ENCODE measurements at regions of chr14 and their contacts with region 1.

Region 1: GRCh38 chr14:73728717-73729330 is 14.6 kb upstream of the PNMA1 start:
- DNase-seq: peak; percentile 77
- H3K4me3 Mint-ChIP-seq: no peak overlapping the region
- H3K27ac Mint-ChIP-seq: peak overlapping the region; percentile 84
- H3K4me1 Mint-ChIP-seq: peaks cover 35% of the 10 kb centered on the region
- H3K27me3 Mint-ChIP-seq: no peaks in the 10 kb centered on the region

Region 2: GRCh38 chr14:73696466-73697400 is 32.1 kb before region 1 on chr14:
- intact Hi-C with region 1: no loop called
- DNase-seq: no peak
- H3K4me3 Mint-ChIP-seq: peak overlapping the region; percentile 42
- H3K27ac Mint-ChIP-seq: peak overlapping the region; percentile 83
- H3K4me1 Mint-ChIP-seq: peaks cover 34% of the 10 kb centered on the region
- H3K27me3 Mint-ChIP-seq: no peaks in the 10 kb centered on the region

Region 3: DNA sequence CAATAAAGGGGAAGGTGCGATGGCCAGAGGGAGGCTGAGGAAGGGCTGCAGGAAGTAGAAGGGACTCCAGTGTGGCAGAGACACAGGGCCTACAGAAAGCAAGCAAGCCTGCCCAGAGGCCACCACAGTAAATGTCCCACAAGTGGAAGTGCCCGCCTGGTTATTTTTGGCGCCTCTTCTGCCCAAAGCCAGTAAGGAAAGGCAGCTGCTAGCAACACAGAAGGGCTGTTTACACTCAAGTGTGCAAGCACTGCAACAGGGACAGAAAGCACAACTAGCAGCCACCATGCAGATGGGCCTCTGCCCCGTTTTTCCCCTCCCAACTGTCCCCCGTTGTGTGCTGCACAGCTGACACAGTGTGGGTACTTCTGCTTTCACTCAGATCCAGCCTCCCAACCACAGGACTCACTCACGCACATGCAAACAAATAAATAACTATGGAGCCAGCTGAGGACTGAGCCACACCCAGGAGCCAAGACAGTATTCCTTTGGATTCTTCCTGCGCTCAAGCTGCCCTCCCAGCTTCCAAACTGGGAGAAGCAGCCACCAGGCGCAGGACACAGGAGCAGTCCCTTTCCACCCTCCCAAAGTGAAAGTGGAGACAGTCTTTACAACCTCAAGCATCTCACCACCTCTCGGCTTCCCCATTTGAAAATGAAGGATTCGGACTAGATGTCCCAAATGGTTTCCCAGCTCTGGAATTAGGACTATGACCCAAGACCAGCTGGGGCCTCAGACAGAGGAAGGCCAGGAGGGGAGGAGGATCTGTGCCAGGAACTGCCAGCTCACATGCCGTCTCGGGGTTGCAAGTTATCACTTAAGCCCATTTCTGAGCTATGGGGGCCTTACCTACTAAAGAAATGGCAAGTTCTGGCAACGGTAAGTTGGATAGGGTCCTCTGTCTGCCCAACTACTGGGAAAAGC is 25.4 kb after region 1 on chr14:
- intact Hi-C with region 1: loop called (anchors 2 kb)
- DNase-seq: peak; percentile 50
- H3K4me3 Mint-ChIP-seq: peak overlapping the region; percentile 91
- H3K27ac Mint-ChIP-seq: peak overlapping the region; percentile 75
- H3K4me1 Mint-ChIP-seq: peaks cover 87% of the 10 kb centered on the region
- H3K27me3 Mint-ChIP-seq: no peaks in the 10 kb centered on the region

Region 4: DNA sequence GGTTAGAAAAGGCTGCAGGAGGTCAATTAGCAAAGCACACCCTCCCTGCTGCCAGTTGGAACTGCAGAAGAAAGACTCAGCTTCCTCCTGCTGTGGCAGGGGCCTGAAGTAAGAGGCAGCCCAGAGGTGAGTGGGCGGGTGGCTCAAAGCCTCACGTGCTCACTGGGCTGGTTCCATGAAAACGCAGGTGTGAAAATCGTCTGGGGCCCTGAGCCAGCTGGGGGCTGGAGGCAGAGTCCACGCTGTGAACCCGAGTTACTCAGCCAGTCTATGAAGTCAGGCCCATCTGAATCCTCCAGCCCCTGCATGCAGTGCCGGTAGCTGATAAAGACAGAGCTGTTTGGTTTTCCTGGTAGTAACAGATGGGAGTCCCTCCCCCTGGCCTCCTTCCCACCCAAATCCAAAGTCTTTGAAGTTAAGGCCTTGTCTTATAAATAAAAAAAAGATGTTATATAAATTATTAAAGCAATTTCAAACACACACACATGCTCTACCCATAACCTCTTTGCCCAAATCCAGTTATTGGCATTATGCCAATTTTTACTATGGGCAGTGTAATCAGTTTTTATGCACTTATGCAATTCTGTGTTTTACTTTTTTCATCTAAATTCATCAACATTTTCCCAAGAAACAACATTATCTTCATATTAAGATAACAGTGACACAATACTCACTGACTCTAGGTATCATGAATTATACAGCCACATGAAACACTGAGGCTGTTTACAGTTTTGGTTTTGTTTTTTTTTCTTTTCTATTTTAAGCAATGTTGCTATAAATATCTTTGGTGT is 43.2 kb after region 1 on chr14:
- intact Hi-C with region 1: loop called (anchors 5 kb)
- DNase-seq: peak; percentile 49
- H3K4me3 Mint-ChIP-seq: peak overlapping the region; percentile 49
- H3K27ac Mint-ChIP-seq: peak overlapping the region; percentile 62
- H3K4me1 Mint-ChIP-seq: peaks cover 57% of the 10 kb centered on the region
- H3K27me3 Mint-ChIP-seq: no peaks in the 10 kb centered on the region

Region 5: DNA sequence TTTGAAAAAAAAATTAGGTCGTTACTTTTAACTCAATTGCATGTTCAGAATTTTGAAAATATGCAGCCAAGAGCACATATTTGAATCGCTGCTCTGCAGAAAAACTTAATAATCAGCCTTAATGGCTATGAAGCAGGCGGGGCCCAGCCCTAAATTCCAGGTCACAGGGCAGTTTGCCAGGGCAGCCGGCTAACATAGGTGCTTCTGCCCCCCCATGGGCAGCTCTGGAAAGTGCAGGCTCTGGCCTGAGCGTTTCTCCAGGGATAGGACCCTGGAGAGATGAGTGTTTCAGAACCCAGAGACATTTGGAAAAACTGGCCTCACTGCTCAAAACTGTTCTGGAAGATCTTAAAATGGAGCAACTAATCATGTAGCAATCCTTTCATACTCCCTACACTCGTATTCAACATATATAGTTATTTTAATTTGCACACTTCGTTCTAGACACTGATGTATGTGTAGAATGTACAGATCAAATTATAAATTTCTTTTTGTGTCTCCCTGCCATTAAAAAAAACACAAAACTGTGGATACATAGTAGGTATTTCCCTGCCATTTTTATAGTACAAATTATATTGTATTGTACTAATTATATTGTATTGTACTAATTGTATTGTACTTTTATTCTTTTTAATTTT is 96.8 kb after region 1 on chr14:
- intact Hi-C with region 1: loop called (anchors 1 kb)
- DNase-seq: peak; percentile 52
- H3K4me3 Mint-ChIP-seq: no peak overlapping the region
- H3K27ac Mint-ChIP-seq: no peak overlapping the region
- H3K4me1 Mint-ChIP-seq: peaks cover 23% of the 10 kb centered on the region
- H3K27me3 Mint-ChIP-seq: peaks cover 11% of the 10 kb centered on the region

Region 6: DNA sequence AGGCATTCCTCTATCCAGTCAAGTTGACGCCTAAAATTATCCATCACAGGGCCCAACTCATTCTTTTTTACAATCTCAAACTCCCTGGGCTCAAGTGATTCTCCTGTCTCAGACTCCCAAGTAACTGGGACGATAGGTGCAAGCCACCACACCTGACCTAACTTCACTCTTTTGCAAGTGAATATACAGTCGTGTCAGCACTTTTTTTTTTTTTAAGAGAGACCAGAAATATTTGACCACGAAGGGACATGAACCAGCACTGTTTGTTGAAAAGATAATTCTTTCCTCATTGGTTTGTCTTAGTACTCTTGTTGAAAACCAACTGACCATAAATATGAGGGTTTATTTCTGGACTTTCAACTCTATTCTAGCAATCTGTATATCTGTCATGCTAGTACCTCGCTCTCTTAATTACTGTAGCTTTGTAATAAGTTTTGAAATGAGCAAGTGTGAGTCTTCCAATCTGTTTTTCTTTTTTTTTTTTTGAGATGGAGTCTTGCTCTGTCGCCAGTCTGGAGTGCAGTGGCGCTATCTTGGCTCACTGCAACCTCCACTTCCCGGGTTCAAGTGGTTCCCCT is 136.8 kb after region 1 on chr14:
- intact Hi-C with region 1: loop called (anchors 5 kb)
- DNase-seq: no peak
- H3K4me3 Mint-ChIP-seq: no peak overlapping the region
- H3K27ac Mint-ChIP-seq: no peak overlapping the region
- H3K4me1 Mint-ChIP-seq: peaks cover 2% of the 10 kb centered on the region
- H3K27me3 Mint-ChIP-seq: no peaks in the 10 kb centered on the region

Region 7: DNA sequence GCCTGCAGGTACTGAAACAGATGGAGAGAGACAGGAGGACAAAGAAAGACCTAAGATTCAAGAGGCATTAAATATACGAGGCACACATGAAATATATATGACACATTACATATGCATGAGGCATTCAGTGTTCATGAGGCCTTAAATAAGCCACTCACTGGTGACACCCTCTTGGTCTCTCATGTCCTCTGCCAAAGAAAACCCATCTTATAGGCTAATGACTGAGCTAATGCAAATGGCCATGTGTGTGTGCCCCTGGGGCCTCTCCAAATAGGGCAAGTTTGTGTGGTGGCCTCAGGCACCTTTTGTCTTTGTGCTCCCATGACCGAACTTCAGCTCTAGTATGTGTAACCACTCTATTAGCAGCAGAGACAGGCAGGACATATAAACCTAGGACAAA is 240.1 kb after region 1 on chr14:
- intact Hi-C with region 1: no loop called
- DNase-seq: no peak
- H3K4me3 Mint-ChIP-seq: no peak overlapping the region
- H3K27ac Mint-ChIP-seq: no peak overlapping the region
- H3K4me1 Mint-ChIP-seq: no peaks in the 10 kb centered on the region
- H3K27me3 Mint-ChIP-seq: no peaks in the 10 kb centered on the region

Measured in activated T-helper 2 cell treated with anti-CD3 and anti-CD28 coated beads, Interferon-gamma antibody, Interleukin-2, Interleukin-4, amounts not matched to agents 10 μg/mL and 5 μg/mL and 100 μg/mL, durations not matched to agents 14 hours and 24 hours and 36 hours (primary cell).